Caco-2 (cell line): ENCODE measurements at regions of chr20 and their contacts with region 1.

Region 1: GRCh38 chr20:54070187-54070987 is at the start of gene BCAS1:
- DNase-seq: peak; percentile 70 to 81
- H3K4me3 ChIP-seq: peak within 1 kb of the TSS; percentile 11; the same call in 1 of the 2 replicates
- H3K4me3 Mint-ChIP-seq: peak within 1 kb of the TSS; percentile 16
- H3K27ac Mint-ChIP-seq: peak within 1 kb of the TSS; percentile 64
- H3K4me1 ChIP-seq: peaks cover 51% of the 10 kb centered on the region
- H3K4me1 Mint-ChIP-seq: peaks cover 43% of the 10 kb centered on the region
- H3K27me3 ChIP-seq: no peaks in the 10 kb centered on the region
- H3K27me3 Mint-ChIP-seq: no peaks in the 10 kb centered on the region
- CTCF ChIP-seq: no peak
- total RNA-seq, gene BCAS1: 1.2 and 2.0 TPM in 2 replicates

Region 2: DNA sequence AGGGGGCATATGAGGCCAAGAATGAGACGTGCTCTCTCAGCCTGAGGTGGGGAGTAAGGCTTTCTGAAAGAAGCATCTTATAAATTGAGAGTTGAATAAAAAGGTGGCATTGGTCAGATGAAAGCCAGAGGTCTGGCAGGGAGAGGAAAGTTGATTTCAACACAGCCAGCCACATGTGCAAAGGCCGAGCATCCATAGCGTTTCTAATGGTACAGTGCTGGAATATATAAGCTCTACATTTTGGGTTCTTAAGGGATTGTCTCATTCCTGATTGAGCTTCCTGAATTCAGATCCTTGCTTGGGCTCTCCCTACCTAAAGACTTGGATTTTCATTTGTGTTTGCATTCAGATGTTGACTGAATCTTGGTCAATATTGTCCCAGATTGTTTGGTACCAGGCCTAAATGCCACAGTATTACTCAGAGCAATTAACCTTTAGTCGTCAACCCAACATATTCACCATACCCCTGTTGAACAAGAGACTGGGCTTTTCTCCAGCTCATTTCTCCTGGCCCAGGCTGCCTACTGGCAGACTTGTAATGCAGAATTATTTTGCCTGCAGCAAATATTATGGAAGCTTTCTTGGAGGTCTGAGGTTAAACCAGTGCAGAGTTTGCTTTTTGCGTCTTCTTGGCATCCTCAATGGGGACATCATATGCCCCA is 14.5 kb after region 1 on chr20:
- CTCF ChIA-PET with region 1: no interaction called
- POLR2A ChIA-PET with region 1: no interaction called
- intact Hi-C with region 1: loop called (anchors 2 kb)
- DNase-seq: no peak
- H3K4me3 ChIP-seq: no peak overlapping the region
- H3K4me3 Mint-ChIP-seq: no peak overlapping the region
- H3K27ac Mint-ChIP-seq: no peak overlapping the region
- H3K4me1 ChIP-seq: peaks cover 6% of the 10 kb centered on the region; the same call in 1 of the 2 replicates
- H3K4me1 Mint-ChIP-seq: peaks cover 7% of the 10 kb centered on the region
- H3K27me3 ChIP-seq: no peaks in the 10 kb centered on the region
- H3K27me3 Mint-ChIP-seq: peaks cover 3% of the 10 kb centered on the region
- CTCF ChIP-seq: no peak

Region 3: DNA sequence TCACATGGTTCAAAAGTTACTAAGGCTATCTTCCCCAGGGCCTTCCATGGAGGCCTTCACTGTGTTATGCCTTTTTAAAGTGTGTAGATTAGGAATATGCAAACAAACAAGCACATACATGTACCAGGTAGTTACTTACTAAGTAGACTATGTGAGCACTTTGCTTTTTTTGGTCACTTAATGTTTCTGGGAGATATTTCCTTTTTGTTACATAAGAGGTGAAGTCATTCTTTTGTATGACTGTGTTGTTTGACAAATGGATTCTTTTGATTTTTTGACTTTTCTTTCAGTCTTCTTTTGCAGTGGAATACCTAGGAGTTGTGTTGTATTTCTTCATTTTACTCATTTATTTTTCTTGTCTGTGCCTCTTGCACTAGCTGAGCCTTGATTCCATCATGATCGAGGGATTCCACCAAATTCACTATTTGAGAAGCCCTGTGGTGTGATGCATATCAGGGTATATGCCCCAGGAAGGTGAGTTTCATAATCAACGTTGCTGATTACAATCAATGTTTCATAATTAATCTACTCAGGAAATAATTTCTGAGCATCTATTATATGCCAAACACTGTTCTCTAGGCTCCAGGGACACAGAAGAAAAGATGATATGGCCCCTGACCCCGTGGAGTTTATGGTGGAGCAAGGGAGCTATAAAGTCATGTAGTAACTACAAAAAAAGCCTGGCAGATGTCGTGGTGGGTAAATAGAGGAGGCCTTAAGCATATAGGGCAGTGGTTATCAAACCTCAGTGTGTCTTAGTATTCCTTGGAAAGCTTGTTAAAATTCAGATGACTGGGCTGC is 39.9 kb after region 1 on chr20:
- CTCF ChIA-PET with region 1: no interaction called
- POLR2A ChIA-PET with region 1: no interaction called
- intact Hi-C with region 1: no loop called
- DNase-seq: no peak
- H3K4me3 ChIP-seq: no peak overlapping the region
- H3K4me3 Mint-ChIP-seq: no peak overlapping the region
- H3K27ac Mint-ChIP-seq: no peak overlapping the region
- H3K4me1 ChIP-seq: peaks cover 12% of the 10 kb centered on the region; the same call in 1 of the 2 replicates
- H3K4me1 Mint-ChIP-seq: peaks cover 4% of the 10 kb centered on the region
- H3K27me3 ChIP-seq: no peaks in the 10 kb centered on the region
- H3K27me3 Mint-ChIP-seq: peaks cover 2% of the 10 kb centered on the region
- CTCF ChIP-seq: no peak